Right ventricle myocardium inferior (tissue), 1 donor: ENCODE measurements at regions of chr13 and their contacts with region 1.

Region 1: GRCh38 chr13:94435604-94436226 is 43.8 kb downstream of the DCT start:
- DNase-seq: no peak
- ATAC-seq: no peak

Region 2: GRCh38 chr13:94470126-94470525 is 34.4 kb after region 1 on chr13:
- intact Hi-C with region 1: no loop called
- DNase-seq: no peak
- ATAC-seq: no peak

Region 3: GRCh38 chr13:94617389-94618000 is 181.8 kb after region 1 on chr13:
- intact Hi-C with region 1: loop called (anchors 2 kb)
- DNase-seq: no peak
- ATAC-seq: no peak

Region 4: GRCh38 chr13:95403828-95404522 is 968.3 kb after region 1 on chr13:
- intact Hi-C with region 1: loop called (anchors 10 kb)
- DNase-seq: peak; percentile 89
- ATAC-seq: peak; percentile 90